ENCODE measurements at regions of chr4 and their contacts with region 1.

Region 1: GRCh38 chr4:116101321-116101720 is 984.1 kb downstream of the TRAM1L1 start:
- DNase-seq: no peak
- H3K4me3 ChIP-seq: no peak overlapping the region
- H3K27ac ChIP-seq: no peak overlapping the region
- H3K4me1 ChIP-seq: no peaks in the 10 kb centered on the region
- H3K27me3 ChIP-seq: no peaks in the 10 kb centered on the region
- CTCF ChIP-seq: no peak
- POLR2A ChIP-seq: no peak

Region 2: GRCh38 chr4:116839826-116840225 is 738.5 kb after region 1 on chr4:
- intact Hi-C with region 1: loop called (anchors 5 kb)
- DNase-seq: no peak
- H3K4me3 ChIP-seq: no peak overlapping the region
- H3K27ac ChIP-seq: no peak overlapping the region
- H3K4me1 ChIP-seq: no peaks in the 10 kb centered on the region
- H3K27me3 ChIP-seq: no peaks in the 10 kb centered on the region
- CTCF ChIP-seq: no peak
- POLR2A ChIP-seq: no peak

Measured in breast epithelium (tissue), 4 donors.